Caco-2 (cell line): ENCODE measurements at regions of chr12 and their contacts with region 1.

Region 1: DNA sequence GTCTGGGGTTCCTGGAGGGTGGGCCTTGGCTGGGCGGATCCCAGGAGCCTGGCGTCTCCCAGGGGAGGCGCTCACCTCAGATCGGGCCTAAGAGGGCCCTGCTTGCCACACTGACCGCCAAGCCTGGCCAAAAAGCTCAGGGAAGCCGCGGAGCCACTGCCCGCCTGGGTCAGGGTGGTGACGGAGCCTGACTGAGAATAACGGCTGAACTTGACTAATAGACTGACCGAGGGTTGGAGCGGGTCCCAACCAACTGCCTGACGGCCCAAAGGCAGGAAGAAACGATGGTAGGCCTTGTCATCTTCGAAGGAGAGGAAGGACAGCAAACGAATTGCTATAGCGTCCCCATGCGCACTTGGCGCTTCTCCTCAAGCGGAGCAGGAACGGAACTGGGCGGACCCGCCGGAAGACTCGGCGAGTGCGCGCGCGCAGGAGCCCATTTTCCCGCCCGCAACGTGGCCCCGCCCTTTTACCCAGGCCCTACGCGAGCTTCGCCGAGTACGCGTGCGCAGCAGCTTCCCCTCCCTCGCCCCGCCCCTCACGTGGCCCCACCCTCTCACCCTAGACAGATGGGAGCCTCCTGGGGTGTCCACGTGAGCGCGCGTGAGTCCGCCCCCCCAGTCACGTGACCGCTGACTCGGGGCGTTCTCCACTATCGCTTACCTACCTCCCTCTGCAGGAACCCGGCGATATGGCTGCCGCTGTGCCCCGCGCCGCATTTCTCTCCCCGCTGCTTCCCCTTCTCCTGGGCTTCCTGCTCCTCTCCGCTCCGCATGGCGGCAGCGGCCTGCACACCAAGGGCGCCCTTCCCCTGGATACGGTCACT is at the starts of genes ERP29 and TMEM116:
- DNase-seq: peak; percentile 98 to 99
- H3K4me3 ChIP-seq: peak within 1 kb of the TSS; percentile 90
- H3K4me3 Mint-ChIP-seq: peak within 1 kb of the TSS; percentile 90
- H3K27ac Mint-ChIP-seq: peak within 1 kb of the TSS; percentile 91
- H3K4me1 ChIP-seq: peaks cover 7% of the 10 kb centered on the region; the same call in 1 of the 2 replicates
- H3K4me1 Mint-ChIP-seq: peaks cover 20% of the 10 kb centered on the region
- H3K27me3 ChIP-seq: no peaks in the 10 kb centered on the region
- H3K27me3 Mint-ChIP-seq: no peaks in the 10 kb centered on the region
- CTCF ChIP-seq: peak; percentile 51 to 71
- total RNA-seq, gene ERP29: 226 and 231 TPM in 2 replicates
- total RNA-seq, gene TMEM116: 10.3 and 11.0 TPM in 2 replicates

Region 2: DNA sequence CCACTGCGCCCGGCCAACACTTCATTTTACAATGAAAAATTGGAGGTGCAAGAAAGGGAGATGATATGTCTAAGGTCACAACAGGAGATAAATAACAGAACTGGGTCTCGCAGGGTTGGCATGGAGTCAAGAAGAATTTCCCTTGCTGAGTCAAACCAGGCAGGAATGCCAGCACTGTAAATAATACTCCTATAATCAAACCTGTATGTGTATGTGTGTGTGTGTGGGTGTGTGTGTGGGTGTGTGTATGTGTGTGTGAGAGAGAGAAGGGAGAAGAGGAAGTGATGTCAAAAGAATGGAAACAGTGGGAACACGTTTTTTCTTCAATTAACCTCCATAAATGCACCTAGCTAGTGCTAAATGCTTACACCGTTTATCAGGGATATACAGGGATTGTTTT is 70.4 kb before region 1 on chr12:
- CTCF ChIA-PET with region 1: interaction called, 23 read pairs
- POLR2A ChIA-PET with region 1: no interaction called
- intact Hi-C with region 1: loop called (anchors 2 kb)
- DNase-seq: no peak
- H3K4me3 ChIP-seq: no peak overlapping the region
- H3K4me3 Mint-ChIP-seq: no peak overlapping the region
- H3K27ac Mint-ChIP-seq: no peak overlapping the region
- H3K4me1 ChIP-seq: no peaks in the 10 kb centered on the region
- H3K4me1 Mint-ChIP-seq: no peaks in the 10 kb centered on the region
- H3K27me3 ChIP-seq: no peaks in the 10 kb centered on the region
- H3K27me3 Mint-ChIP-seq: no peaks in the 10 kb centered on the region
- CTCF ChIP-seq: no peak